WTC11 (cell line): ENCODE measurements at regions of chr5 and their contacts with region 1.

Region 1: GRCh38 chr5:141155540-141156374 is 5.9 kb downstream of the PCDHB6 start:
- DNase-seq: peak; percentile 61
- ATAC-seq: peak; percentile 84
- H3K4me3 Mint-ChIP-seq: peak overlapping the region; percentile 49
- H3K27ac Mint-ChIP-seq: no peak overlapping the region
- H3K4me1 Mint-ChIP-seq: 0 out of 2 replicates have a peak, but pooled peaks cover 5% of the 10 kb centered on the region
- H3K27me3 Mint-ChIP-seq: no peaks in the 10 kb centered on the region
- CTCF ChIP-seq: peak; percentile 55

Region 2: GRCh38 chr5:140977003-140977402 is 178.8 kb before region 1 on chr5:
- CTCF ChIA-PET with region 1: no interaction called
- POLR2A ChIA-PET with region 1: no interaction called
- DNase-seq: no peak
- ATAC-seq: no peak
- H3K4me3 Mint-ChIP-seq: no peak overlapping the region
- H3K27ac Mint-ChIP-seq: peak overlapping the region; percentile 15; the same call in 1 of the 2 replicates
- H3K4me1 Mint-ChIP-seq: peaks cover 33% of the 10 kb centered on the region
- H3K27me3 Mint-ChIP-seq: no peaks in the 10 kb centered on the region
- CTCF ChIP-seq: no peak

Region 3: GRCh38 chr5:141121563-141121962 is 34.2 kb before region 1 on chr5 and contains the start of gene PCDHB4:
- CTCF ChIA-PET with region 1: interaction called, 36 read pairs
- POLR2A ChIA-PET with region 1: no interaction called
- DNase-seq: peak; percentile 69
- ATAC-seq: peak; percentile 73
- H3K4me3 Mint-ChIP-seq: peak within 1 kb of the TSS; percentile 51
- H3K27ac Mint-ChIP-seq: no peak within 1 kb of the TSS
- H3K4me1 Mint-ChIP-seq: no peaks in the 10 kb centered on the region
- H3K27me3 Mint-ChIP-seq: no peaks in the 10 kb centered on the region
- CTCF ChIP-seq: peak; percentile 79
- total RNA-seq, gene PCDHB4: 2.3 to 2.6 TPM (median 2.3 TPM) in 3 replicates

Region 4: GRCh38 chr5:141135030-141135717 is 20.6 kb before region 1 on chr5 and contains the start of gene PCDHB5:
- CTCF ChIA-PET with region 1: interaction called, 45 read pairs
- POLR2A ChIA-PET with region 1: no interaction called
- DNase-seq: peak; percentile 72
- ATAC-seq: peak; percentile 89
- H3K4me3 Mint-ChIP-seq: peak within 1 kb of the TSS; percentile 74
- H3K27ac Mint-ChIP-seq: peak within 1 kb of the TSS; percentile 64; the same call in 1 of the 2 replicates
- H3K4me1 Mint-ChIP-seq: peaks cover 4% of the 10 kb centered on the region; the same call in 1 of the 2 replicates
- H3K27me3 Mint-ChIP-seq: no peaks in the 10 kb centered on the region
- CTCF ChIP-seq: peak; percentile 72
- total RNA-seq, gene PCDHB5: 6.8 to 12.5 TPM (median 8.5 TPM) in 3 replicates

Region 5: DNA sequence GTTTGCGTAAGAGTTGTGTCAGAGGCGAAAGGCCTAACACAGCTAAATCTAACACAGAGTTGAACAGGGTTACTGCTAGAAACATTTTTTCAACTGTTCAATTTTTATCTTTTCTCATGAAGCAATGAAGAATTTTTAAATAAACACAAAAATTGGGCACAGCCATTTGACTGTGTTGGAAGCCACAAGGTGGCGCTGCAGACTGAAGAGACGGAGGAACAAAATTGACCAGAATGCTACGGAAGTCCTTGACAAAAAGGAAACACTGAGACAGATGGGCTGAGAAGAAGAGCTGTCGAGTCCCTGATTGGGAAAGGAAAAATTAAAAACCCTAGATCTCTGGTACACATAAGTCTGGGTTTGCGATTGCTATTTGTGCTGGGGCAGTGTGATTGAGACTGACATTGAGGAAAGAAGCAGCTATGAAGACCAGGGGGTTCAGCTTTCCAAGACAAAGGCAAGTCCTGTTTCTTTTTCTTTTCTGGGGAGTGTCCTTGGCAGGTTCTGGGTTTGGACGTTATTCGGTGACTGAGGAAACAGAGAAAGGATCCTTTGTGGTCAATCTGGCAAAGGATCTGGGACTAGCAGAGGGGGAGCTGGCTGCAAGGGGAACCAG is 31.2 kb after region 1 on chr5 and contains the start of gene PCDHB9:
- CTCF ChIA-PET with region 1: interaction called, 39 read pairs
- POLR2A ChIA-PET with region 1: no interaction called
- DNase-seq: peak; percentile 71
- ATAC-seq: peak; percentile 58
- H3K4me3 Mint-ChIP-seq: peak within 1 kb of the TSS; percentile 21
- H3K27ac Mint-ChIP-seq: no peak within 1 kb of the TSS; the same call in 1 of the 2 replicates
- H3K4me1 Mint-ChIP-seq: peaks cover 15% of the 10 kb centered on the region
- H3K27me3 Mint-ChIP-seq: peaks cover 4% of the 10 kb centered on the region; the same call in 1 of the 2 replicates
- CTCF ChIP-seq: peak; percentile 49; the same call in 1 of the 2 replicates
- total RNA-seq, gene PCDHB9: 1.6 to 2.3 TPM (median 1.7 TPM) in 3 replicates

Region 6: DNA sequence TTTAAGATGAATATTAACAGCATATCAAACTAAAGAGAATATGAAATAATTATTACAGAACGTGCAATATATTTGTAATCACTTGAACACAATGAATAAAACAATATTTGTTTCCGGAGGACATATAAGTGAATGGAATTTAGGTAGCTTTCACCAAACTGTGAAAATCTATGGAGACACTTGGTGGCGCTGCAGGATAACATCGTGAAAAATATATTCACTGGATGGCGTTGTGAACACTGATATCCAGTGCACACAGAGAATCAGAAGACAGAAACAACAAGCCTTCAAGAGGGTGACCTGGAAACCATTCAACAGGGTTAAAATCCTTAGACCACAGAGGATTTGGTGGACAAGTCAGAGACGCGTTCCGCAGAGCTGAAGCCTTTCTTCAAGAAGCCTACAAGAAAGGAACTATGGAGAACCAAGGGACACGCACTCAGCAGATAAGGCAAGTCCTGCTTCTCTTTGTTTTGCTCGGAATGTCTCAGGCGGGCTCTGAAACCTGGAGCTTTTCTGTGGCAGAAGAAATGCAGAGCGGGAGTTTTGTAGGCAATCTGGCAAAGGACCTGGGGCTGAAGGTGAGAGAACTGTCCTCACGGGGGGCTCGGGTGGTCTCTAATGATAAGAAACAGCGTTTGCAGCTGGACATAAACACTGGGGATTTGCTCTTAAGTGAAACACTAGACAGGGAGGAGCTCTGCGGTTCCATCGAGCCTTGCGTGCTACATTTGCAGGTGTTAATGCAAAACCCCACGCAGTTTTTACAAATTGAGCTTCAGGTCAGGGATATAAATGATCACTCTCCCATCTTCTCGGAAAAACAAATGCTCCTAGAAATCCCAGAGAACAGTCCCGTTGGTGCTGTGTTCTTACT is 43.8 kb after region 1 on chr5 and contains the start of gene PCDHB11:
- CTCF ChIA-PET with region 1: interaction called, 12 read pairs
- POLR2A ChIA-PET with region 1: no interaction called
- DNase-seq: no peak
- ATAC-seq: peak; percentile 67
- H3K4me3 Mint-ChIP-seq: peak within 1 kb of the TSS; percentile 24
- H3K27ac Mint-ChIP-seq: no peak within 1 kb of the TSS
- H3K4me1 Mint-ChIP-seq: peaks cover 7% of the 10 kb centered on the region
- H3K27me3 Mint-ChIP-seq: no peaks in the 10 kb centered on the region; the same call in 1 of the 2 replicates
- CTCF ChIP-seq: peak; percentile 32; the same call in 1 of the 2 replicates
- total RNA-seq, gene PCDHB11: 0.61 to 1.2 TPM (median 0.92 TPM) in 3 replicates

Region 7: DNA sequence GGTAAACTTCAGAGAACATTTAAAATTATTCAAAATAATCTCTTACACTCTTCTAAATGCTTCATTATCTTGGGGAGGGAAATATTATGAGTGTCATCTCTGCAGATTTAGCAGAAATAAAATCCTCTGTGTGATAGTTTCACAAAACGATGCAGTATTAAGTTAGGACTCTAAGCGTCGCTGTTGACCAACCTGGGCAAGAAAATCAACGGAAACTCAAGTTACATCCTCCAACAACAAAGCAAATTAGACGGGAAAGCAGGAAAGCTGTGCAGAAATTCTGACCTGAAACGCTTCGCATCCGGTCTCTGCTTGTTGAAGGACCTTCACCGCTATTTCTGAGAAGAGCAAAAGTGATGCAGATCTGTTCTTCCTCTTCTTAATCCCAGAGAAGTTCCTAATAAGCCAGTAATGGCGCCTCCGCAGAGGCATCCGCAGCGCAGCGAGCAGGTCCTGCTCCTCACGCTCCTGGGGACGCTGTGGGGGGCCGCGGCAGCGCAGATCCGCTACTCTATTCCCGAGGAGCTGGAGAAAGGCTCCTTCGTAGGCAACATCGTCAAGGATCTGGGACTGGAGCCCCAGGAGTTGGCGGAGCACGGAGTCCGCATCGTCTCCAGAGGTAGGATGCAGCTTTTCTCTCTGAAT is 218.0 kb after region 1 on chr5 and contains the start of gene PCDHGA6:
- CTCF ChIA-PET with region 1: no interaction called
- POLR2A ChIA-PET with region 1: no interaction called
- DNase-seq: no peak
- ATAC-seq: no peak
- H3K4me3 Mint-ChIP-seq: peak within 1 kb of the TSS; percentile 31
- H3K27ac Mint-ChIP-seq: no peak within 1 kb of the TSS
- H3K4me1 Mint-ChIP-seq: peaks cover 5% of the 10 kb centered on the region
- H3K27me3 Mint-ChIP-seq: peaks cover 9% of the 10 kb centered on the region
- CTCF ChIP-seq: no peak
- total RNA-seq, gene PCDHGA6: 2.6 to 3.3 TPM (median 3.0 TPM) in 3 replicates